Right ventricle myocardium inferior (tissue), 1 donor: ENCODE measurements at regions of chr5 and their contacts with region 1.

Region 1: DNA sequence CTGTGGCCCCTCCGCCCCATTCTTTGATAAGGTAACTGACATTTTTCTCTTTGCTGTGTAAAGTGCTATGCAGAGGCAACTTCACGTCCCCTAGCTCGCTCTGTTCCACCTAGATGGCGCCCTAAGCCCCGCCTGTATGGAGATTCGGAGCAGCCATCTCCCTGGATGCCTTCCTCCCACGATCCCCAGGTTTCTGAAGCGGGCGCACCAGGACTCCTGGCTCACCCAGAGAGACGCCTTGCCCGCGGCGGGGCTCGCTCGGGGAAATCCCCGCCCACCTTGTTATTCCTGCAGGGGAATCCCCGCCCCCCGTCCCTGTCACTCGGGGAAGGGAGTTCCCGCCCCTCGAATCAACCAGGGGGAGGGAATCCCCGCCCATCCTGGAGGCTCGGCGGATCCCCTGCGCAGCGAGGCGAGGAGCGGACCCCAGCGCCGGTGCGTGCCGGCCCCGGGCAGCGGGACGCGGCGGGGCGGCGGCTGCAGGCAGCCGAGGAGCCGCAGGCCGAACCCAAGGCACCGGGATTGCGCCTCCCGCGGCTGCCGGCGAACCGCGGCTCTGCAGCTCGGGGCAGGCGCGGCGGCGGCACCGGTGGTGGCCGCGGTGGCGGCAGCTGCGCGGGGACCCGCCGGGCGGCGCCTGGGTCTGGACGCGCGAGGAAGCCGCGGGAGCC is at the start of gene PDZD2:
- DNase-seq: peak; percentile 90
- ATAC-seq: peak; percentile 74
- total RNA-seq, gene PDZD2: 59.4 TPM

Region 2: GRCh38 chr5:31581498-31582099 is 57.3 kb before region 1 on chr5:
- intact Hi-C with region 1: loop called (anchors 5 kb)
- DNase-seq: no peak
- ATAC-seq: no peak

Region 3: GRCh38 chr5:31671339-31671741 is 32.5 kb after region 1 on chr5:
- intact Hi-C with region 1: loop called (anchors 2 kb)
- DNase-seq: peak; percentile 71
- ATAC-seq: peak; percentile 87

Region 4: DNA sequence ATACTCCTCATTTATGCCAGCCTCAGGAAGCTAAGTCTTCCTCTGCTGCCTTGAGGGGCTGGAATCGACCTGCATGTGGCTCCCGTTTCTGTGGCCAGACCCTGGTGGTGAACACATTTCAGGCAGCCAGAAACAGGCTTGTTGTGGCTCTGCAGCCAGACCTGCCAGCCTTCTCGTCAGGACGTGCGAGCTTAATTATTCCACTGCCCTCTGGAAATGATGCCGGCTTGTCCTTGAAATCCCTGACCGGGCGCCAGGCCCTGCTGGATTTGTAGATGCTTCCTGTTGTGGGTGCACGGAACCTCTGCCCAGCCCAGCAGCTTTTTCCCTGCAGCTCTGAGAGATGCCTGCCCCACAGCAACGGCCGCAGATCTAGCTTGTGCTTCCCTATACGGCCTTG is 41.6 kb after region 1 on chr5:
- intact Hi-C with region 1: loop called (anchors 5 kb)
- DNase-seq: peak; percentile 81
- ATAC-seq: peak; percentile 73

Region 5: GRCh38 chr5:31809050-31809870 is 170.4 kb after region 1 on chr5:
- intact Hi-C with region 1: loop called (anchors 1 kb)
- DNase-seq: no peak
- ATAC-seq: peak; percentile 90

Region 6: DNA sequence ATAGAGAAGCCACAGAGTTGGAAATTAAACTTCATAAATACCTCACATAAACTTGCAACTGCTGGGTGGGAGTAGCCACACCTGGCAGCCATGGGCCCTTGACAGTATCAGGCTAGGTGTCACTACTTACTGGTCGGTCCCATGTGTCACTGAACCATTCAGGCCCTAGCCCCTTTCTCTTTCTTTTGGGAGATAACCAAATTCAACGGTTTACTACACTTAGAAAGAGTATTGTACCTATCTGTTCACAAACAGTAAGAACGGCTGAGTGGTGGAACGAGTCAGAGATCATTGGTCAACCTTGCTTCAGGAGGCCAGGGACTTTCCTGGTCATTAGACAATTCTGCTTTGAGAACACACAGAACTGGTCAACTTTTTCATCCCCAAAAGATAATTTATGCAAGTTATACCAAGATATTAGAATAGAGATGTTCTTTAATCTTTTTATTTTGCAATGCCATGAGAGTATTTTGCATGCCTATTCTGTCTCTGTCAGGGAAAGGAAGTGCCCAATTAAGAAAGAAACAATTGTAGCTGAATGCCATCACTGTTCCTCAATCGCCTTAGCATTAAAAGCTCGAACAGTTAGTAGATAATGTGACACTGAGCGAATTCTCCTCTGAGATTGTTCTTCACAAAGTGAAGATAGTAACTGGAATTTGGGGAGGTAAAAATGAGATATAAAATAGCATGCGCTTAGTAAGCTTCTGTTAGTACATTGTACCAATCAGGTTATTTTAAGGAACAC is 484.3 kb after region 1 on chr5:
- intact Hi-C with region 1: no loop called
- DNase-seq: no peak
- ATAC-seq: peak; percentile 29